Endothelial cell of umbilical vein (primary cell): ENCODE measurements at regions of chr10 and their contacts with region 1.

Region 1: GRCh38 chr10:104274762-104275721 is 6.1 kb downstream of the GSTO2 start:
- DNase-seq: peak; percentile 50
- H3K4me3 ChIP-seq: no peak overlapping the region
- H3K27ac ChIP-seq: no peak overlapping the region
- H3K4me1 ChIP-seq: no peaks in the 10 kb centered on the region
- H3K27me3 ChIP-seq: peaks cover 0 to 6% of the 10 kb centered on the region in 2 experiments
- CTCF ChIP-seq: peak; percentile 88 to 96
- POLR2A ChIP-seq: no peak

Region 2: DNA sequence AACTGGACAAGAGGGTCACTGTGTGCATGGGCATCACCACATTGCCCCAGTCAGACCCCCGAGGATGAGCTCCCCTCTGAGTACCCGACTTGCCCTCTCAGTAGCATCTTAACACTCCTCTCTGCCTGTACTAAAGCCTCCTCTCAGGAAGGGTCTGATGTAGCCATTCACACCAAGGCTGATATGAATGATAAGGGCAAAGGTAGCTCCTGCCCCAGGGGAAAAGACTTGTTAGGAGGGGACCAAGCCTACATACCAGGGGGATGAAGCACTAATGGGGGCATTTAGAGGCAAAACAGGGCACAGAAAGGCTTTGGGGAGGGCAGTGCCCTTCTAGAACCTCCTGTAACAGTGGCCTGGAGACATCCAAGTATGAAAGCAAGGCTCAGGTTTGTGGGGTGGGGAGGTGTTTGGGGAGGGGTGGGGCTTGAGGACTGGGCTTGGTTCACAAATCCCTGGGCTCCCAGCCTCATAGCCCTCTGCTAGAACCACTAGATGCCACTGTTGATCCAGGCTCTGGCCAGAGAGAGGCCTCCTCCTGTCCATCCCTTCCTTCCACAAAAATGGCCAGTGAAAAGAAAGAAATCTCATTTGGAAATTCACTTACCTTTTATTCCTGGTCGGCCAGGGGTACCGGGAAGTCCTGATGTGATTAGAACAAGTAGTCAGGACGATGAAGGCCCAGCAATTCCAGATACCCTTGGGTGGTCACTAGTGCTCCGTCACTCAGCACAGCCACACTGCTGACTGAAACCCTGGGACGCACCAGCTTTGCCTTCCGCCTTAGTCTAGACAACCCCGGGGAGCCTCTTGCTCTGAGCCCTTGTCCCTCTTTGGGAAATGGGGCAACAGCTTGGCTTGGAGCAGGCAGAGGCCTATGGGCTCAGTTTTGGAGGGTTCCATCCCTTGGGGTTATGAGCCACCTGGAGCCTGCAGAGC is 229.6 kb before region 1 on chr10:
- CTCF ChIA-PET with region 1: interaction called, 9 read pairs
- POLR2A ChIA-PET with region 1: no interaction called
- dilution Hi-C with region 1: no loop called
- intact Hi-C with region 1: loop called (anchors 1 kb)
- DNase-seq: peak; percentile 76
- H3K4me3 ChIP-seq: no peak overlapping the region
- H3K27ac ChIP-seq: no peak overlapping the region
- H3K4me1 ChIP-seq: peaks cover 17% of the 10 kb centered on the region
- H3K27me3 ChIP-seq: no peaks in the 10 kb centered on the region
- CTCF ChIP-seq: peak; percentile 56 to 86
- POLR2A ChIP-seq: no peak

Region 3: DNA sequence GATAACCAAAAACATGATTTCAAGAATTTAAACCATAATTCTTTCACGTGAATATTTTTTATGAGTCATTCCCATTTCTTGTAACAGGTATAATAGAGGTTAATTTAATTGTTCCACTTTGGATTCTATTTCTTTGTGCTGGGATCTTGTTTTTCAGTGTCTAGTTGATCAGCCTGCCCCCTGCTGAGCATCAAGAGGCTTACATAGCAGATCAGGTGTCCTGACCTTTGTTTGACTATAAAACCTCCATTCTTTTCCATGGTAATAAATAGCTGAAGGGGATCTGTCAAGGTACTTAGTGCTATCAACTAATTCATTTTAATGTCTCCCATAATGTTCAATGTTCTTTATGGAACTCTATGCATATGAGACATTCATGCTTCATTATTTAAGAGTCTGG is 194.3 kb before region 1 on chr10:
- CTCF ChIA-PET with region 1: no interaction called
- POLR2A ChIA-PET with region 1: no interaction called
- dilution Hi-C with region 1: no loop called
- intact Hi-C with region 1: no loop called
- DNase-seq: peak; percentile 45
- H3K4me3 ChIP-seq: no peak overlapping the region
- H3K27ac ChIP-seq: no peak overlapping the region
- H3K4me1 ChIP-seq: peaks cover 18% of the 10 kb centered on the region
- H3K27me3 ChIP-seq: no peaks in the 10 kb centered on the region
- CTCF ChIP-seq: peak; percentile 46 to 49
- POLR2A ChIP-seq: no peak

Region 4: GRCh38 chr10:104260775-104261115 is 14.3 kb before region 1 on chr10:
- CTCF ChIA-PET with region 1: interaction called, 28 read pairs
- POLR2A ChIA-PET with region 1: interaction called, 9 read pairs
- dilution Hi-C with region 1: no loop called
- intact Hi-C with region 1: no loop called
- DNase-seq: peak; percentile 88
- H3K4me3 ChIP-seq: peak overlapping the region in 1 of 3 experiments; percentile 37
- H3K27ac ChIP-seq: peak overlapping the region; percentile 94
- H3K4me1 ChIP-seq: peaks cover 63% of the 10 kb centered on the region
- H3K27me3 ChIP-seq: no peaks in the 10 kb centered on the region
- CTCF ChIP-seq: no peak
- POLR2A ChIP-seq: no peak

Region 5: GRCh38 chr10:104300736-104301292 is 25.8 kb after region 1 on chr10:
- CTCF ChIA-PET with region 1: interaction called, 36 read pairs
- POLR2A ChIA-PET with region 1: no interaction called
- dilution Hi-C with region 1: no loop called
- intact Hi-C with region 1: no loop called
- DNase-seq: peak; percentile 85
- H3K4me3 ChIP-seq: no peak overlapping the region
- H3K27ac ChIP-seq: peak overlapping the region; percentile 89
- H3K4me1 ChIP-seq: peaks cover 31% of the 10 kb centered on the region
- H3K27me3 ChIP-seq: no peaks in the 10 kb centered on the region
- CTCF ChIP-seq: no peak
- POLR2A ChIP-seq: no peak

Region 6: DNA sequence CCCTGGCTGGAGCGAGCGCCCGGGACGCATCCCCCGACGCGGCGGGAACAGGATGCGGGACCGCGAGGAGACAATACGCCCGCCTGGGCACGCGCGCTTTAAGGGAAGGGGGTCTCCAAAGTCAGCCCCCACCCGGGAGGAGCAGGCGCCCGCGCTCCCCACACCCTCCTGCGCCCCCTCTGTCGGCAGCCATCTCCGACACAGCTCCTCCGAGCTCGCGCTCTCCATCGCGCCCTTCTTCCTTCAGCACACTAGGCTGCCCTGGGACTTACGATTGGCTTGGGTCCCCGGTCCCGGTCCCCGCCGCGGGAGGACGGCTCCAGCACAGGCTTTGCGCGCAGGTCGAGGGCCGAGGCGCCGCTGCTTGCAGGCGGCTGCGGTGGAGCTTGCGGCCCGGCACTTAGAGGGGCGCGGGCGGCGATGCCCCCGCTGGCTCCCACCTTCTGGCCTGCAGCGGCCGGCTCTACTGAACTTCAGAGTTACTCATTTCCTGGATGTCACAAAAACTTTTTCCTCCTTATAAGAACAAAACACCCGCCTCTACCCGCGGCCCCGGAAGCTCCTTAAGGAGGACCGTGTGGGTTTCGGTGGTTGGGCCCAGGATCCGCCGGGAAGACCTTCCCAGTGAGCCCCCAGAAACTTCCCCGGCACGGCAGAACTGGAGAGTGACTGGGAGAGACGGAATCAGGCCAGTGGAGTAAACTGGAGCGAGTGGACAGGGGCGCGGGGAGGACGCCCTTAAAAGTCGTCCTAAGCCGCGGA is 63.1 kb after region 1 on chr10 and contains the start of gene ITPRIP:
- CTCF ChIA-PET with region 1: interaction called, 13 read pairs
- POLR2A ChIA-PET with region 1: no interaction called
- dilution Hi-C with region 1: no loop called
- intact Hi-C with region 1: no loop called
- DNase-seq: peak; percentile 93
- H3K4me3 ChIP-seq: peak within 1 kb of the TSS; percentile 64 to 99 (median 94)
- H3K27ac ChIP-seq: peak within 1 kb of the TSS; percentile 100
- H3K4me1 ChIP-seq: peaks cover 53% of the 10 kb centered on the region
- H3K27me3 ChIP-seq: no peaks in the 10 kb centered on the region
- CTCF ChIP-seq: peak; percentile 14 to 32
- POLR2A ChIP-seq: peak; percentile 77
- total RNA-seq, gene ITPRIP: 31.4 and 33.3 TPM in 2 replicates

Region 7: GRCh38 chr10:104353325-104354048 is 78.4 kb after region 1 on chr10 and contains the start of gene CFAP58:
- CTCF ChIA-PET with region 1: interaction called, 79 read pairs
- POLR2A ChIA-PET with region 1: no interaction called
- dilution Hi-C with region 1: no loop called
- intact Hi-C with region 1: loop called (anchors 1 kb)
- DNase-seq: peak; percentile 88
- H3K4me3 ChIP-seq: peak within 1 kb of the TSS; percentile 38 to 66 (median 42)
- H3K27ac ChIP-seq: no peak within 1 kb of the TSS
- H3K4me1 ChIP-seq: peaks cover 13% of the 10 kb centered on the region
- H3K27me3 ChIP-seq: peaks cover 0 to 5% of the 10 kb centered on the region in 2 experiments
- CTCF ChIP-seq: peak; percentile 66 to 75
- POLR2A ChIP-seq: no peak
- total RNA-seq, gene CFAP58: 0.29 and 0.35 TPM in 2 replicates

Region 8: DNA sequence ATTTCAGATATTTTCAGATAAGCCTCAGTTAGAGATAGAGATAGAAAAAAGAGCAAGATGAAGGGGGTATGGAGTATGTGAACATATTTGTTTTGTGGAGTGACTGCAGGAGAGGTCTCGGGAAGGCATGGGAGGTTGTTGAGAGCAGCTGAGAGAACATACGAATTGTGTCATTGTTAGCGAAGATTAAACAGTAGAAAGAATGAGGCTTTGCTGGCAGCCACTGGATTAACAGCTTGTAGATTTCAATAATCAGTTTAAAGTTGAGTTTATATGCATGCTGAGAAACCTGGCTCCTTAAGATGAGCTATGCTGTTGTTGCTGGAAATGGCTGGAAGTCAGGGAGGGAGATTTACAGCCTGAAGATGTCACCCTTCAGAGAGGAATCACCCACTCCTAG is 265.1 kb after region 1 on chr10:
- CTCF ChIA-PET with region 1: no interaction called
- POLR2A ChIA-PET with region 1: no interaction called
- dilution Hi-C with region 1: no loop called
- intact Hi-C with region 1: no loop called
- DNase-seq: no peak
- H3K4me3 ChIP-seq: no peak overlapping the region
- H3K27ac ChIP-seq: no peak overlapping the region
- H3K4me1 ChIP-seq: no peaks in the 10 kb centered on the region
- H3K27me3 ChIP-seq: no peaks in the 10 kb centered on the region
- CTCF ChIP-seq: no peak
- POLR2A ChIP-seq: no peak

Region 9: GRCh38 chr10:104601166-104601565 is 326.1 kb after region 1 on chr10:
- CTCF ChIA-PET with region 1: no interaction called
- POLR2A ChIA-PET with region 1: no interaction called
- dilution Hi-C with region 1: no loop called
- intact Hi-C with region 1: no loop called
- DNase-seq: no peak
- H3K4me3 ChIP-seq: no peak overlapping the region
- H3K27ac ChIP-seq: no peak overlapping the region
- H3K4me1 ChIP-seq: no peaks in the 10 kb centered on the region
- H3K27me3 ChIP-seq: no peaks in the 10 kb centered on the region
- CTCF ChIP-seq: no peak
- POLR2A ChIP-seq: no peak